ENCODE measurements at regions of chr20 and their contacts with region 1.

Region 1: DNA sequence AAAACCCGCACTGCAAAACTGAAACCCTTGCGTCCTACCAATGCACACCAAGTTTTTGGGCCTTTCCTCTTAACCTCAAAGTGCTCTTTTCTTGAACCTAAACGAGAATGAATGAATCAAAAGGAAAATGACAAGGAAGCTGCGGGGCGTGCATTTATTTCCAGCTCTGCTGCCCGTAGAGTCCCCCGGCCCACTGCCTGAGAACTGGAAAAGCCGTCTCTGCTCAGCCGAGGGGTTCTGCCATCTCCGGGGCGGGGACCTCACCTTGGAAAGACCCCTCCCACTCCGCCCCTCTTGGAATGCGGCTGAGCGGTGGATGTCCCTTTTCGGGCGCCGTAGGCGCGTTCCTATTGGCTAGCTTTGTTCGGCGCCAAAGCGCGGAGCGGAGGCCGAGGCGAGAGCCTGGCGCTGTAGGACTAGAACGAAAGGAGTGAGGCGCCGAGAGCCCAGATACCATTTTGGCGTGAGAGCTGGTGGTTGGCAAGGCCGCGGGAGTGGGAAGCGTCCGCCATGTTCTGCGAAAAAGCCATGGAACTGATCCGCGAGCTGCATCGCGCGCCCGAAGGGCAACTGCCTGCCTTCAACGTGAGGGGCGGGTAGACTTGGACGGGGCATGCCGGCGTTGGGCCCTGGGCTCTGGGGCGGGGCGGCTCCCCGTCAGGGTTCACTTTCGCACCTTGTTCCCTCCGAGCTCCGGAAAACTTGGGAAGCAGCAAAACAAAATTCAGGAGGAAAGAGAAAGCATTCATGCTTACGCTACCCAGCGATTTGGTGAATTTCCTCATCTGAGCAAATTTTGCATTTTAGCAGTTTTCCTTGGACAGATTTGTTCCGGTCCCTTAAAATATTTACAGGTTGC is at the start of gene GINS1:
- DNase-seq: peak; percentile 58 to 80 (median 70)
- H3K4me3 ChIP-seq: peak within 1 kb of the TSS; percentile 87
- H3K4me3 Mint-ChIP-seq: peak within 1 kb of the TSS; percentile 90 to 94 (median 92)
- H3K27ac ChIP-seq: peak within 1 kb of the TSS; percentile 66
- H3K27ac Mint-ChIP-seq: peak within 1 kb of the TSS; percentile 53 to 91 (median 85)
- H3K4me1 ChIP-seq: peaks cover 11% of the 10 kb centered on the region
- H3K4me1 Mint-ChIP-seq: peaks cover 11 to 22% (median 14%) of the 10 kb centered on the region in 3 donors
- H3K27me3 ChIP-seq: no peaks in the 10 kb centered on the region
- H3K27me3 Mint-ChIP-seq: no peaks in the 10 kb centered on the region
- total RNA-seq, gene GINS1: 26.0 to 31.2 TPM

Region 2: GRCh38 chr20:25294459-25295385 is 112.8 kb before region 1 on chr20:
- CTCF ChIA-PET with region 1: interaction called, 11 read pairs
- POLR2A ChIA-PET with region 1: interaction called, 4 read pairs
- DNase-seq: peak; percentile 10 to 71 (median 34)
- H3K4me3 ChIP-seq: no peak overlapping the region
- H3K4me3 Mint-ChIP-seq: no peak overlapping the region
- H3K27ac ChIP-seq: no peak overlapping the region
- H3K27ac Mint-ChIP-seq: peak overlapping the region in 3 of 8 donors; percentile 40 to 66 (median 47)
- H3K4me1 ChIP-seq: no peaks in the 10 kb centered on the region
- H3K4me1 Mint-ChIP-seq: peaks cover 0 to 4% (median 2%) of the 10 kb centered on the region in 3 donors
- H3K27me3 ChIP-seq: no peaks in the 10 kb centered on the region
- H3K27me3 Mint-ChIP-seq: no peaks in the 10 kb centered on the region

Region 3: DNA sequence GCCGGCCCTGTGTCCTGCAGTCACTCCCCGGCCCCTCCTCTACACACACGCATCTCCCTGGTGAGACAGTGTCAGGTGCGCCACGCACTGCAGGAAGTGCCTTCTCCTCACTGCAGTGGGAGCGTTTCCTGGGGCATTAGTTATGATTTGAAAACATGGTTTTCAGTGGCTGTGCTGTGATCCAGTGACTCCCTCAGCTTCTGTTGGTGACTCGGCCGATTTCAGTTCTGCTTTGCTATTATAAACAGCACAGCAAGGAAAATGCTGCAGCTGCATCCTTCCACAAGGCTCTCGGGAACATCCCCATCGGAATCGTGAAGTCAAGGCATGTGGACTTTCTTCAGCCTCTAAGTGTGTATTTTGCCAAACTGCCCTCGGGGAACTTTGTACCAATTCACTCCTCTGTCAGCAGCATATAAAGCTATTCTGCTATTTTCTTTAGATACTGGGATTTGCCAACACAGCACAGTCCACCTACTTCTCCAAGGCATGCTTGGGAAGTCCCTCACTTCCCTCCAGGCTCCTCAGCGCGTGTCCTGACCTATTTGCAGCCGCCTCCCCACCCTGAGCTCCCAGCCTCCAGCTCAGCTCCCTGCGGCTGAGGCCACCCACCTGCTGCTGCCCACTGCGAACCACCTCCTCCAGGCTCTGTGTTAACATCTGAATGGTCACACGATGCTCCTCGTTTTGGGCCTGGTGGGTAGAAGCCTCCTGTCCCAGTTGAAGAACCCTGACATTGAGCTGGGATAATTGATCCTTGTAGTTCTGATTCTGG is 54.4 kb after region 1 on chr20:
- CTCF ChIA-PET with region 1: no interaction called
- POLR2A ChIA-PET with region 1: no interaction called
- DNase-seq: no peak
- H3K4me3 ChIP-seq: no peak overlapping the region
- H3K4me3 Mint-ChIP-seq: no peak overlapping the region
- H3K27ac ChIP-seq: no peak overlapping the region
- H3K27ac Mint-ChIP-seq: peak overlapping the region in 1 of 8 donors; percentile 4
- H3K4me1 ChIP-seq: no peaks in the 10 kb centered on the region
- H3K4me1 Mint-ChIP-seq: no peaks in the 10 kb centered on the region
- H3K27me3 ChIP-seq: no peaks in the 10 kb centered on the region
- H3K27me3 Mint-ChIP-seq: peaks cover 0 to 2% of the 10 kb centered on the region in 2 donors